MCF 10A (cell line): ENCODE measurements at regions of chr19 and their contacts with region 1.

Region 1: GRCh38 chr19:35693830-35694599 is 10.3 kb upstream of the ZBTB32 start:
- DNase-seq: peak; percentile 93
- H3K4me3 Mint-ChIP-seq: no peak overlapping the region
- H3K27ac Mint-ChIP-seq: no peak overlapping the region
- H3K4me1 Mint-ChIP-seq: no peaks in the 10 kb centered on the region
- H3K27me3 Mint-ChIP-seq: no peaks in the 10 kb centered on the region
- CTCF ChIP-seq: peak; percentile 95

Region 2: DNA sequence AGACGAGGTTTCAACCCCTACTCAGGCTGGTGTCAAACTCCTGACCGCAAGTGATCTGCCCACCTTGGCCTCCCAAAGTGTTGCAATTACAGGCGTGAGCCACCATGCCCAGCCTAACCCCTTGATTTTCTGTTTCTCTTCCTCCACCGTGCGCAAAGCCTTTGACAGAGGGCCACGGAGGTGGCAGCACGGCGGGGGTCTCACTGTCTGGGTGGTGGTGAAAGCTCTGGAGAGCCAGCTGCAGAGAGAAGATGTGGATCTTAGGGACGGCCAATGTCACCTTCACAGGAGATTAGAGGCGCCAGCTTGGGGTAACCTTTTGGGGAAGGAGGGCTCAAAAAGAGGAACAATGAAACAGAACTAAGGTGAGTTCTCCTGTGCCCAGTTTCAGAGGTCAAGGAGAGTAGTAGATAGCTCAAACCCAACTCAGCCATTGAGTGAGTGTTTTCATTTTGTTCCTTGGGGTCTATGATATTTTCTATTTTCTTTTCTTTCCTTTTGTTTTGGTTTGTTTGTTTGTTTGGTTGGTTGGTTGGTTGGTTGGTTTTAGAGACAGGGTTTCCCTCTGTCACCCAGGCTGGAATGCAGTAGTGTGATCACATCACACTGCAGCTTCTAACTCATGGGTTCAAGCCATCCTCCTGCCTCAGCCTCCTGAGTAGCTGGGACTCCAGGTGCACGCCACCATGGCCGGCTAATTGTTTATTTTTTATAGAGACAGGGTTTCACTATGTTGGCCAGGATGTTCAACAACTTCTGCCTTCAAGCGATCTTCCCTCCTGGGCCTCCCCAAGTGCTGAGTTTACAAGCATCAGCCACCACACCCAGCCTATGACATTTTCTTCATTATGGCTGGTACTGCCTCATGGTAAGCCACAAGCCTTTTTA is 285.5 kb before region 1 on chr19:
- CTCF ChIA-PET with region 1: no interaction called
- POLR2A ChIA-PET with region 1: no interaction called
- intact Hi-C with region 1: no loop called
- DNase-seq: no peak
- H3K4me3 Mint-ChIP-seq: no peak overlapping the region
- H3K27ac Mint-ChIP-seq: no peak overlapping the region
- H3K4me1 Mint-ChIP-seq: peaks cover 6% of the 10 kb centered on the region
- H3K27me3 Mint-ChIP-seq: peaks cover 57% of the 10 kb centered on the region
- CTCF ChIP-seq: no peak

Region 3: GRCh38 chr19:35822579-35822978 is 128.6 kb after region 1 on chr19:
- CTCF ChIA-PET with region 1: interaction called, 3 read pairs
- POLR2A ChIA-PET with region 1: no interaction called
- intact Hi-C with region 1: loop called (anchors 5 kb)
- DNase-seq: no peak
- H3K4me3 Mint-ChIP-seq: no peak overlapping the region
- H3K27ac Mint-ChIP-seq: no peak overlapping the region
- H3K4me1 Mint-ChIP-seq: no peaks in the 10 kb centered on the region
- H3K27me3 Mint-ChIP-seq: peaks cover 40% of the 10 kb centered on the region
- CTCF ChIP-seq: no peak